PC-3 (cell line): ENCODE measurements at regions of chr3 and their contacts with region 1.

Region 1: DNA sequence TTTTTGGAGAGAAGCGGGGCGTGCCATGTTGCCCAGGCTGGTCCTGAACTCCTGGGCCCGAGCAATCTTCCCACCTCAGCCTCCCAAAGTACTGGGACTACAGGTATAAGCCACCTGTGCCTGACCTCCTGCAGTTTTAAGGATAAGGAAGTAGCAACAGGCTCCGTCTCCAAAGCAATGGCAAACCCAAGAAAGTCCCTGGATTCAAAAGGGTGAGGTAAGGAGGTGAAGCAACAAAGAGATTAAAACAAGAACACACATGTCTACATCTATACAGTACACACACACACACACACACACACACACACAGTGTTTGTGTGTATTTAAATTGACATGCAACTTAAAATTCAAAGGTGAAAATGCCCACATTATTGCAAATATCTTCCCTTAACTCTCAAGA is 58.9 kb downstream of the ABCC5 start:
- DNase-seq: no peak
- ATAC-seq: peak; percentile 13
- H3K4me3 ChIP-seq: 0 out of 2 replicates have a peak overlapping the region, but pooled peaks have one; percentile 1
- H3K27ac ChIP-seq: peak overlapping the region; percentile 93
- H3K4me1 ChIP-seq: peaks cover 24% of the 10 kb centered on the region
- H3K27me3 ChIP-seq: no peaks in the 10 kb centered on the region
- CTCF ChIP-seq: no peak

Region 2: DNA sequence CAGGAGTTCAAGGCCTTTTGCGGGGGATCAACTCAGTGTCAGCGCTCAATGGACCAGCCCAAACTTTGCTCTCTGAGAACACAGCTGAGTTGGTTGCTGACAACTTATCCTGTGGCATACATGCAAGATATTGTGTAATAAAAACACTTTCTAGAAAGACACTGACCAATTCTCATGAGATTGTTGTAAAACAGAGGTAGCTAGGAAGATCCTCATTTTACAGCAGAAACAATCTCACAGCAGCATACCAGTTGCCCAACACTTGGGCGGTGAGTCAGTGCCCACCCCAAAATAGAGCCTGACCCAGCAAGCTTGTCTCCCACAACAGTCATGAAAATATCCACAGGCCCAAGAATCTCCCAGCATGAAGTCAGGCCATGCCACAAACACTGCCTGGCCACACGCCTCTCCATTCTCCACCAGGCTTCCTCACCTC is 421.5 kb before region 1 on chr3:
- CTCF ChIA-PET with region 1: no interaction called
- POLR2A ChIA-PET with region 1: no interaction called
- intact Hi-C with region 1: no loop called
- DNase-seq: no peak
- ATAC-seq: no peak
- H3K4me3 ChIP-seq: no peak overlapping the region
- H3K27ac ChIP-seq: no peak overlapping the region
- H3K4me1 ChIP-seq: no peaks in the 10 kb centered on the region
- H3K27me3 ChIP-seq: peaks cover 4% of the 10 kb centered on the region; the same call in 1 of the 2 replicates
- CTCF ChIP-seq: no peak

Region 3: GRCh38 chr3:183629546-183630301 is 329.1 kb before region 1 on chr3:
- CTCF ChIA-PET with region 1: no interaction called
- POLR2A ChIA-PET with region 1: no interaction called
- intact Hi-C with region 1: no loop called
- DNase-seq: no peak
- ATAC-seq: no peak
- H3K4me3 ChIP-seq: no peak overlapping the region
- H3K27ac ChIP-seq: no peak overlapping the region
- H3K4me1 ChIP-seq: no peaks in the 10 kb centered on the region
- H3K27me3 ChIP-seq: no peaks in the 10 kb centered on the region
- CTCF ChIP-seq: no peak

Region 4: DNA sequence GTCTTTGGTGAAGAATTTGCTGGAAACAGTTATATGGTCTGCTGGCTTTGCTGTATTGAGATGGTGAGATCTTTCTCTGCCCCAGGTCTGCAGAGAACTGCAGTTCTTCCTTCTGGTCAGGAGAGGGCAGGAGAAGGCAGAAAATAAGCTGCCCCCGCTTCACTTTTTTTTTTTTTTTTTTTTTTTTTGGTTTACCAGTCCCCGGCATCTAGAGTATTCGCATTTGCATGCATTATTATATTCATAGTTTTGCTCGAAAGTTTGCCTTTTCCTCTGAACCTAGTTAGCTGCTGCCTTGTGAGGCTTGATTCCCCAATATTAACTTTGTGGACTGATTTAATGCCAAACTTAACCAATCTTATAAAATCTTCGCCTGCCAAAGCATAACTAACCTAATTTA is 63.5 kb before region 1 on chr3:
- CTCF ChIA-PET with region 1: no interaction called
- POLR2A ChIA-PET with region 1: no interaction called
- intact Hi-C with region 1: loop called (anchors 1 kb)
- DNase-seq: peak; percentile 71
- ATAC-seq: peak; percentile 67
- H3K4me3 ChIP-seq: no peak overlapping the region
- H3K27ac ChIP-seq: no peak overlapping the region
- H3K4me1 ChIP-seq: no peaks in the 10 kb centered on the region
- H3K27me3 ChIP-seq: no peaks in the 10 kb centered on the region
- CTCF ChIP-seq: peak; percentile 88

Region 5: GRCh38 chr3:183924956-183925355 is 33.8 kb before region 1 on chr3:
- CTCF ChIA-PET with region 1: no interaction called
- POLR2A ChIA-PET with region 1: no interaction called
- intact Hi-C with region 1: loop called (anchors 1 kb)
- DNase-seq: peak; percentile 97
- ATAC-seq: peak; percentile 98
- H3K4me3 ChIP-seq: no peak overlapping the region; the same call in 1 of the 2 replicates
- H3K27ac ChIP-seq: peak overlapping the region; percentile 97
- H3K4me1 ChIP-seq: peaks cover 24% of the 10 kb centered on the region
- H3K27me3 ChIP-seq: no peaks in the 10 kb centered on the region
- CTCF ChIP-seq: no peak

Region 6: GRCh38 chr3:184005941-184006507 is 47.2 kb after region 1 on chr3:
- CTCF ChIA-PET with region 1: no interaction called
- POLR2A ChIA-PET with region 1: interaction called, 3 read pairs
- intact Hi-C with region 1: loop called (anchors 1 kb)
- DNase-seq: peak; percentile 98
- ATAC-seq: peak; percentile 90
- H3K4me3 ChIP-seq: peak overlapping the region; percentile 42; the same call in 1 of the 2 replicates
- H3K27ac ChIP-seq: peak overlapping the region; percentile 89
- H3K4me1 ChIP-seq: peaks cover 49% of the 10 kb centered on the region
- H3K27me3 ChIP-seq: no peaks in the 10 kb centered on the region
- CTCF ChIP-seq: no peak